CD8-positive, alpha-beta T cell (primary cell): ENCODE measurements at regions of chr20 and their contacts with region 1.

Region 1: DNA sequence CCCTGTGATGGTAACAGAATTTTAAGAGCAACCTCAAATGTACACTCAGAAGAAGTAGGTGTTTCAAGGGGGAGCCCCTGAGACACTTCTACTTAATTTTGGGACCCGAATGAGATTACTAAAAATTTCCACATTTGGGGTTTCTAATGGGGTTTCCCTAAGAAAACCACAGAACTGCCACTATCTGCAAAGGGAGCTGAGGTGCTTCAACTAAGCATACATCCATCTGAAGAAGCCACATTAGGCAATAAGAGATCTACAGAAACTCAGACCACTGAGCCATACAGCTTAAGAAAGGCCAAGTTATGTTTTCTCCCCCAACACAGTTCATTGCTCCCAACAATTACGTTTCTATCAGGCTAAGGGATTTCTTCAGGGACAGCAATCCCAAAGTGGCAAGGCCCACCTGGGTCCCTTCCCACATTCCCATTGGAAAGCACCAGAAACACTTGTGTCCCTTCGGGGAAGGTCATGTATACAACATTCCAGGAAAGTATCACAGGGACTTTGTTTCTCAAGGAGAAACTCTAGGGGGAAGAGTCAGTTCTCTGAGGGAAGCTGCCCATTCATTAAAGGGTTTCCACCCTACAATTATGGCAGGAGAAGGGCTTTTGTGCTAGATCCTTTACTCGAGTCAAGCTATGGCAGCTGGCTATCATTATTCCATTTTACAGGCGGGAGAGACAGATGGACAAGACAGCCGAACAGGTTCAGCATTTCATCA is 5.0 kb downstream of the BCL2L1 start:
- DNase-seq: peak in 3 of 9 experiments; percentile 15 to 83 (median 72)
- ATAC-seq: peak; percentile 57
- H3K4me3 ChIP-seq: peak overlapping the region in 1 of 2 experiments; percentile 3
- H3K4me3 Mint-ChIP-seq: peak overlapping the region; percentile 69
- H3K27ac ChIP-seq: peak overlapping the region in 1 of 2 experiments; percentile 55
- H3K27ac Mint-ChIP-seq: peak overlapping the region; percentile 81
- H3K4me1 ChIP-seq: peaks cover 70% of the 10 kb centered on the region
- H3K4me1 Mint-ChIP-seq: peaks cover 92% of the 10 kb centered on the region
- H3K27me3 ChIP-seq: no peaks in the 10 kb centered on the region
- H3K27me3 Mint-ChIP-seq: no peaks in the 10 kb centered on the region
- CTCF ChIP-seq: no peak

Region 2: GRCh38 chr20:31695849-31696804 is 21.5 kb before region 1 on chr20:
- CTCF ChIA-PET with region 1: interaction called, 22 read pairs
- POLR2A ChIA-PET with region 1: no interaction called
- intact Hi-C with region 1: loop called in 1 of 2 experiments (anchors 2 kb)
- DNase-seq: no peak
- ATAC-seq: no peak
- H3K4me3 ChIP-seq: no peak overlapping the region
- H3K4me3 Mint-ChIP-seq: no peak overlapping the region
- H3K27ac ChIP-seq: peak overlapping the region in 1 of 2 experiments; percentile 63
- H3K27ac Mint-ChIP-seq: peak overlapping the region; percentile 82
- H3K4me1 ChIP-seq: peaks cover 27% of the 10 kb centered on the region
- H3K4me1 Mint-ChIP-seq: peaks cover 55% of the 10 kb centered on the region
- H3K27me3 ChIP-seq: no peaks in the 10 kb centered on the region
- H3K27me3 Mint-ChIP-seq: no peaks in the 10 kb centered on the region
- CTCF ChIP-seq: no peak

Region 3: DNA sequence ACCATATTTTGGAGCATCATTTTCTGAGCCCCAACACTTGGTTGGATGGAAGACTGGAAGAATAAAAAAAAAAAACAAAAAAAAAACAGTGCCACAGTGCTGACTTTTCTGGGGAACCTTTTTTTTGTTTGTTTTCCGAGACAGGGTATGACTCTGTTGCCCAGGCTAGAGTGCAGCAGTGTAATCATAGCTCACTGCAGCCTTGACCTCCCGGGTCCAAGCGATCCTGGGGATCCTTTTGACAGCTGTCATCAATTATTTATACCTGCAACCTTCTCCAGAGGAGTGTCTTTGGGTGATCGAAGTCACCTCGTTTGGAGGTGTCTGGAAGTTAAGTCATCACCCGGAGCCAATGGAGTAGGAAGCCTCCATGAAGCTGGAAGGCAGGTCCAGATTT is 13.7 kb after region 1 on chr20:
- CTCF ChIA-PET with region 1: no interaction called
- POLR2A ChIA-PET with region 1: no interaction called
- intact Hi-C with region 1: no loop called
- DNase-seq: no peak
- ATAC-seq: no peak
- H3K4me3 ChIP-seq: no peak overlapping the region
- H3K4me3 Mint-ChIP-seq: no peak overlapping the region
- H3K27ac ChIP-seq: no peak overlapping the region
- H3K27ac Mint-ChIP-seq: no peak overlapping the region
- H3K4me1 ChIP-seq: no peaks in the 10 kb centered on the region
- H3K4me1 Mint-ChIP-seq: no peaks in the 10 kb centered on the region
- H3K27me3 ChIP-seq: no peaks in the 10 kb centered on the region
- H3K27me3 Mint-ChIP-seq: no peaks in the 10 kb centered on the region
- CTCF ChIP-seq: no peak